HEK293 (cell line): ENCODE measurements at regions of chr22 and their contacts with region 1.

Region 1: DNA sequence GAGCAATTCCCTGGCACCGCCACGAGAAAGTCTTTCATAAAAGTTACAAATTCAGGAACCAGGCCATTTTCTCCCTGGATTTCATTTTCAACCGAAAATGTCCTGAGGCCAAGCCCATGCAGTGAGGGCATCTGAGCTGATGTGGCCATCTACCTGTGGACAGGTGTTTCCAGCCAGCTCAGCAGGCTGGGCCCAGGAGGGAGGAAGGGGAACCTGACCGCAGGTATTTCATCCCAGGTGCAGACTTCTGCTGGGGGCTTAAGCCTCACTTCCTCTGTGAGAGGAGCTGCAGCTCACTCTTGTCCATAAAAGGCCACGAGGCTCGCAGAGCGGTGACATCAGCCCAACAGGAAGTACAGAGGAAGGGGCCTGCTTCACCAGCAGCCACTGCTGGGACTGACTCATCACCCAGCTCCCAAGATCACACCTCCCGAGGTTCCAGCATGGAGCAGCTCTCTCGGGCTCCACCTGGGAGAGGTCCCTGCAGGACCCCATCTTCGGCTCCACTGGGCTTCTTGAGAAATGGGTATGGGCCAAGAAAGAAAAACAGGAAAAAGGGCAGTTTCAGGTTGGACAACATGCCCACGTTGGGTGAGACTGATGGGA is 56.4 kb downstream of the MYH9 start:
- H3K4me3 ChIP-seq: no peak overlapping the region
- H3K27ac ChIP-seq: peak overlapping the region; percentile 85
- H3K4me1 ChIP-seq: peaks cover 48% of the 10 kb centered on the region
- CTCF ChIP-seq: no peak; the same call in 1 of the 2 replicates

Region 2: GRCh38 chr22:36301384-36301828 is 30.0 kb before region 1 on chr22:
- CTCF ChIA-PET with region 1: interaction called, 23 read pairs
- POLR2A ChIA-PET with region 1: interaction called, 5 read pairs
- H3K4me3 ChIP-seq: no peak overlapping the region
- H3K27ac ChIP-seq: no peak overlapping the region
- H3K4me1 ChIP-seq: no peaks in the 10 kb centered on the region
- CTCF ChIP-seq: peak; percentile 81

Region 3: GRCh38 chr22:36350751-36351594 is 19.6 kb after region 1 on chr22:
- CTCF ChIA-PET with region 1: interaction called, 10 read pairs
- POLR2A ChIA-PET with region 1: interaction called, 5 read pairs
- H3K4me3 ChIP-seq: no peak overlapping the region
- H3K27ac ChIP-seq: peak overlapping the region; percentile 4; the same call in 1 of the 2 replicates
- H3K4me1 ChIP-seq: peaks cover 33% of the 10 kb centered on the region
- CTCF ChIP-seq: no peak

Region 4: GRCh38 chr22:36454916-36455570 is 123.6 kb after region 1 on chr22:
- CTCF ChIA-PET with region 1: interaction called, 3 read pairs
- POLR2A ChIA-PET with region 1: interaction called, 10 read pairs
- H3K4me3 ChIP-seq: peak overlapping the region; percentile 40
- H3K27ac ChIP-seq: peak overlapping the region; percentile 63
- H3K4me1 ChIP-seq: peaks cover 13% of the 10 kb centered on the region
- CTCF ChIP-seq: peak; percentile 83

Region 5: GRCh38 chr22:36486619-36487384 is 155.4 kb after region 1 on chr22:
- CTCF ChIA-PET with region 1: interaction called, 14 read pairs
- POLR2A ChIA-PET with region 1: interaction called, 7 read pairs
- H3K4me3 ChIP-seq: no peak overlapping the region
- H3K27ac ChIP-seq: no peak overlapping the region
- H3K4me1 ChIP-seq: no peaks in the 10 kb centered on the region; the same call in 1 of the 2 replicates
- CTCF ChIP-seq: peak; percentile 79

Region 6: DNA sequence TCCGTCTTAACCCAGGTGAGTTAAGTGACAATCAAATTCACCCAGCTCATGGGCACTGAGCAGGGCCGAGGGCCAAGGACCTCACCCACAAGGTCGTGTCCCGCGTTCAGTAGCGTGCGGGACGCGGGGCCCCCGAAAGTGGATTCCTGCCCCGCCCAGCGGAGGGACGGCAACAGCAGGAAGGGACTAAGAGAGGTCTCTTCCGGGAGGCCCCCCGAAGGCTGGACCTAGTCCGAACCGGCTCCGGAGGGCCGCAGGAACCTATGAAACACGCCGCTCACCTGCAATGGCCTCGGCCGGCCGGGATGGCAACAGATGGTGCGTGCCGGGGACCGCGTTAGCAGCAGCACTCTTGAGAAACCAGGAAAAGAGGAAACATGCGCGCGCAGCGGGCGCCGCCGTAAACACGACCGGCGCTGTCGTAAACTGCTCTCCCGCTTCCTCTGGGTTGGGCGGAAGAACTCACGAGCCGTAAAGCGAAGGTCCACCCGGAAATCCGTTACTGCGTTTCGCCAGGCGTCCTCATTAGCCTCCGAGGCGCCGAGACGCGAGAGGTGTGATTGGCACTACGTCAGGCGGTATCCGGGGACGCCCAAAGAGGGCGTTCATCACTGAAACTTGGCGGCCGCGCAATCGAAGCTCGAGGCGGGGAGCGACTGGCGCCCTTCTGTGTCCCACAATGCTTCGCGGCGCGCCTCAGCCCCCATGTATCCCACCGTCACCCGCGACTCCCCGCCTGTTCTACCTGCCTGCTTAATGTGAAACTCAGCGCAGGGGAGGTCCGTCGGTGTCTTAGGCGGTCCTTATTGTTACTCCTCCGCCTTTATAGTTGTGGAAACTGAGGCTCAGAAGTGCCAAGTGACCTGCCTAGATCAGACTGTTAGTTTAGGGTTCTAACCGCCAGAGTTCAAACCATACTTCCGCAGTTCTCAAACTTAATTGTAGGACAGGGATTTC is 197.7 kb after region 1 on chr22 and contains the start of gene EIF3D:
- CTCF ChIA-PET with region 1: no interaction called
- POLR2A ChIA-PET with region 1: no interaction called
- H3K4me3 ChIP-seq: peak within 1 kb of the TSS; percentile 94
- H3K27ac ChIP-seq: peak within 1 kb of the TSS; percentile 98
- H3K4me1 ChIP-seq: 0 out of 2 replicates have a peak, but pooled peaks cover 5% of the 10 kb centered on the region
- CTCF ChIP-seq: peak; percentile 18; the same call in 1 of the 2 replicates